ENCODE measurements at regions of chr20 and their contacts with region 1.

Region 1: DNA sequence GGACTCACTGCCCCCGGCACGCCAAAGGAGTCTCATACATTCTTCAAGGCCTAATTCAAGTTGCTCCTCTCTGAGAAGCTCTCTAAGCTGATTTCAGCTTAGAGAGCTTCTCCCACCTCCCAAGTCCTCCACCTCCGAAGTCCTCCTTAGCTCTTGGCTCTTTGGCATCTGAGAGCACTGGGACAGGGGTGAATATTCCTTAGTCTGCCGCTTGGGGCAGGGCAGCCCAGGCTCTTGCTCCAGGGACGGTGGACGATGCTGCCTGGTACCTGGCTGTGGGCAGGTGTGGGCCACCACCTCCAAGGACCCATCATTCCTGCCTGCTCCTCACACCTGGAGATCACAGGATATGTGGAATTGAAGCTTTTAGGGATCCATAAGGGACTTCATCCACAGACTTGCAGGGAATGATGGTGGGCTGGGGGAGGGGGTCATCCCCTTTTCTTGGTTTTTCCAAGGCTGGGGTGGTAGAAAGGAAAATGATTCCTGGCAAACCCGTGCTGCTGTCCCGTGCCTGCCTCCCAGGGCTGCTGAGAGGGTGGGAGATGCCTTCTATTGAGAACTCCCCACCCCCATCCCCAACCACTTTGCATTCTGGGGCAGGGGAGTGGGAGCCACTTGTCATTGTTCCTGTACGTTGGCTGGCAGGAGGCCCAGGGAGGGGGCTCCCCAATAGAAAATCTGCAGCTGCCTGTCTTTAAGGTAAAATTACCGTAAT is 57.4 kb downstream of the ARHGAP40 start:
- DNase-seq: peak; percentile 46
- ATAC-seq: peak; percentile 81
- H3K4me3 Mint-ChIP-seq: no peak overlapping the region
- H3K27ac Mint-ChIP-seq: no peak overlapping the region
- H3K4me1 Mint-ChIP-seq: no peaks in the 10 kb centered on the region
- H3K27me3 Mint-ChIP-seq: peaks cover 7% of the 10 kb centered on the region

Region 2: DNA sequence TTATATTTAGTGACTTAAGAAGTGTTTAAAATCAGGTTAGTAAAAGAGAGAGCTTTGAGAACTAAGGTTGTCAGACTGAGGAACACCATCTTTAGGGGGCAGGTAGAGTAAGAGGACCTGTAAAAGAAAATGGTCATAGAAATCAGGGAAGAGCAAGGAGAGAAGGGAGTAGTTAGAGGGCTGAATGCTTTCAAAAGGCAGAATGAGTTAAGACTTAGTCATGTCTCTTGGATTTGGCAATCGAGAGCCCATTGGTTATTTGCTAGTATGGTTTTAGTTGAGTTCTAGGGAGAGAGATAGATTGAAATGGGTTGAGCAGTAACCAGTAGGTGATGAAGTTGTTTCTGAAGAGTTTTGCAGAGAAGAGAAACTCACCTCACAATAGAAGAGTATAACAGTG is 135.3 kb before region 1 on chr20:
- CTCF ChIA-PET with region 1: no interaction called
- POLR2A ChIA-PET with region 1: no interaction called
- DNase-seq: no peak
- ATAC-seq: no peak
- H3K4me3 Mint-ChIP-seq: no peak overlapping the region
- H3K27ac Mint-ChIP-seq: no peak overlapping the region
- H3K4me1 Mint-ChIP-seq: no peaks in the 10 kb centered on the region
- H3K27me3 Mint-ChIP-seq: no peaks in the 10 kb centered on the region

Region 3: DNA sequence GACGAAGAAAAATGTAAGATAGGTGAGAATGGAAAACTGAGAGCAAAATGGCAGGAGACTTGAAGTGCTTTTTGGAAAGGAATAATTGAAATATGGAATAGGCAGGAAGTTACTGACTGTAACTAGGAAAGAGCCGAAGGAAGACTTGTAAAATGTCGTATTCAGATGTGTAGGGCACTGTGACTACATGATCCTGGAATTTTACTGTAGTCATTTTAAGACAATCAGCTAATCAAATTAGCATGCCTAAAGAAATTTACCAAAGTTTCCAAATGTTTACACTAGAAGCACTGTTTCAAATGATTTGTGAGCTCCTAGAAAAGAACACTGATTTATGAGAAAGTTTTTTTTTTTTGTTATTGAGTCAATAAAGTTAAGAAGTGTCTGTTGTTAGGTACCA is 99.3 kb before region 1 on chr20:
- CTCF ChIA-PET with region 1: no interaction called
- POLR2A ChIA-PET with region 1: no interaction called
- DNase-seq: no peak
- ATAC-seq: no peak
- H3K4me3 Mint-ChIP-seq: no peak overlapping the region
- H3K27ac Mint-ChIP-seq: no peak overlapping the region
- H3K4me1 Mint-ChIP-seq: no peaks in the 10 kb centered on the region
- H3K27me3 Mint-ChIP-seq: no peaks in the 10 kb centered on the region

Region 4: GRCh38 chr20:38645980-38646858 is 12.8 kb before region 1 on chr20:
- CTCF ChIA-PET with region 1: interaction called, 20 read pairs
- POLR2A ChIA-PET with region 1: no interaction called
- DNase-seq: peak; percentile 91
- ATAC-seq: peak; percentile 95
- H3K4me3 Mint-ChIP-seq: peak overlapping the region; percentile 61
- H3K27ac Mint-ChIP-seq: no peak overlapping the region
- H3K4me1 Mint-ChIP-seq: peaks cover 10% of the 10 kb centered on the region
- H3K27me3 Mint-ChIP-seq: peaks cover 43% of the 10 kb centered on the region